ENCODE measurements at regions of chr16 and their contacts with region 1.

Region 1: DNA sequence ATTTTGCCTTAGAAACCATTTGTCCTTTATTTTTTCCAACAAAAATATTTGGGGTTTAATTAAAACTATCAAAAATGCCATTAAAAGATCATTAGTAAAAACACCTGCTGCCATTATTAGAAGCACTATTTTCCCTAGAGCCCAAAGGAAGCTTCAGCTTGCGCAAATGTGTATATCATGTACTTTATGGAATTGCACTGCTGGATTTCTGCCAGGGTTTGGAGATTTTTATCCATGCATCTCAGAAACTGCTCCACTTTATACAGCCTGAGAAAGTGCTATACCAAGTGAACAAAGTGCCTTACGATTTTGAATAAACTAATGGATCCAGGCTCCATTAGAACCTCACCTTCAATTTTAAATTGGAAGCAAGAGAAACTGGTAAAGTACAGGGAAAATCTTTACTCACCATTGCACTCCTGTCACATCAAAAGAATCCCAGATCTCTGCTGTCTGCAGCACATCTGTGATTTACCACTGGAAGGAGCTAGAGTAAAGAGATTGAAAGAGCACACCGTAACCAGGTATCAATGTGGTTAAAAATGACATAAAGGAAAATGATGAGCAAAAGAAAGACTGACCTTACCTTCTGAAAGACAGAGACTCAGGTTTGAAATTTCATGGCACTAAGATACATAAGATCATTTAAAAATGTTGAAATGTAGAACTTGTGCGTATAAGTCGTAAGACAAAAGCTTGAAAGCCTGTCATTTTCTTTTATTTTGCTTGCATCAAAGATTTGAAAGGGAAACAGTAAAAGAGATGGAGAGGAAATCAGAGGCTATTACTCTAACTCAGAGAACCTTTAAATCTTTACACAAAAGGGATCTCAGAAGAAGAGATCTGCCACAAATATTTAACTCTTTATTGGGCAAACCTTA is 678.1 kb upstream of the GOT2 start:
- DNase-seq: peak in 1 of 2 experiments; percentile 4
- H3K4me3 ChIP-seq: no peak overlapping the region
- H3K4me3 Mint-ChIP-seq: no peak overlapping the region
- H3K27ac Mint-ChIP-seq: no peak overlapping the region
- H3K4me1 ChIP-seq: no peaks in the 10 kb centered on the region
- H3K4me1 Mint-ChIP-seq: no peaks in the 10 kb centered on the region
- H3K27me3 ChIP-seq: no peaks in the 10 kb centered on the region
- H3K27me3 Mint-ChIP-seq: peaks cover 4% of the 10 kb centered on the region
- CTCF ChIP-seq: peak in 1 of 2 experiments; percentile 41

Region 2: GRCh38 chr16:59459806-59460205 is 47.6 kb after region 1 on chr16:
- CTCF ChIA-PET with region 1: no interaction called
- POLR2A ChIA-PET with region 1: no interaction called
- intact Hi-C with region 1: no loop called
- DNase-seq: no peak
- H3K4me3 ChIP-seq: no peak overlapping the region
- H3K4me3 Mint-ChIP-seq: no peak overlapping the region
- H3K27ac Mint-ChIP-seq: no peak overlapping the region
- H3K4me1 ChIP-seq: no peaks in the 10 kb centered on the region
- H3K4me1 Mint-ChIP-seq: no peaks in the 10 kb centered on the region
- H3K27me3 ChIP-seq: no peaks in the 10 kb centered on the region
- H3K27me3 Mint-ChIP-seq: no peaks in the 10 kb centered on the region
- CTCF ChIP-seq: no peak

Region 3: GRCh38 chr16:60203525-60204124 is 791.4 kb after region 1 on chr16:
- CTCF ChIA-PET with region 1: no interaction called
- POLR2A ChIA-PET with region 1: no interaction called
- intact Hi-C with region 1: loop called (anchors 5 kb)
- DNase-seq: peak in 1 of 2 experiments; percentile 3
- H3K4me3 ChIP-seq: no peak overlapping the region
- H3K4me3 Mint-ChIP-seq: no peak overlapping the region
- H3K27ac Mint-ChIP-seq: no peak overlapping the region
- H3K4me1 ChIP-seq: no peaks in the 10 kb centered on the region
- H3K4me1 Mint-ChIP-seq: no peaks in the 10 kb centered on the region
- H3K27me3 ChIP-seq: no peaks in the 10 kb centered on the region
- H3K27me3 Mint-ChIP-seq: peaks cover 9% of the 10 kb centered on the region
- CTCF ChIP-seq: peak; percentile 35 to 46